T-cell (primary cell): ENCODE measurements at regions of chr3 and their contacts with region 1.

Region 1: GRCh38 chr3:133487920-133488540 is 85.5 kb upstream of the CDV3 start:
- DNase-seq: peak in 32 of 35 experiments; percentile 22 to 82 (median 40)
- ATAC-seq: peak in 2 of 4 experiments; percentile 32 to 42
- H3K4me3 ChIP-seq: no peak overlapping the region
- H3K4me3 Mint-ChIP-seq: peak overlapping the region in 1 of 3 donors; percentile 41
- H3K27ac ChIP-seq: no peak overlapping the region
- H3K27ac Mint-ChIP-seq: peak overlapping the region; percentile 97 to 99
- H3K4me1 ChIP-seq: peaks cover 26 to 31% of the 10 kb centered on the region in 2 experiments
- H3K4me1 Mint-ChIP-seq: peaks cover 49 to 52% (median 52%) of the 10 kb centered on the region in 3 donors
- H3K27me3 ChIP-seq: peaks cover 0 to 5% of the 10 kb centered on the region in 2 experiments
- H3K27me3 Mint-ChIP-seq: no peaks in the 10 kb centered on the region

Region 2: GRCh38 chr3:133042778-133043177 is 445.3 kb before region 1 on chr3:
- CTCF ChIA-PET with region 1: no interaction called
- POLR2A ChIA-PET with region 1: no interaction called
- DNase-seq: no peak
- ATAC-seq: no peak
- H3K4me3 ChIP-seq: no peak overlapping the region
- H3K4me3 Mint-ChIP-seq: no peak overlapping the region
- H3K27ac ChIP-seq: no peak overlapping the region
- H3K27ac Mint-ChIP-seq: no peak overlapping the region
- H3K4me1 ChIP-seq: peaks cover 0 to 10% of the 10 kb centered on the region in 2 experiments
- H3K4me1 Mint-ChIP-seq: peaks cover 0 to 10% (median 6%) of the 10 kb centered on the region in 3 donors
- H3K27me3 ChIP-seq: peaks cover 3 to 21% of the 10 kb centered on the region in 2 experiments
- H3K27me3 Mint-ChIP-seq: peaks cover 29 to 31% of the 10 kb centered on the region in 2 donors

Region 3: GRCh38 chr3:133475245-133476010 is 12.6 kb before region 1 on chr3:
- CTCF ChIA-PET with region 1: interaction called, 7 to 12 read pairs
- POLR2A ChIA-PET with region 1: interaction called in 1 of 2 experiments, 5 read pairs
- DNase-seq: no peak
- ATAC-seq: peak; percentile 34 to 66 (median 51)
- H3K4me3 ChIP-seq: no peak overlapping the region
- H3K4me3 Mint-ChIP-seq: peak overlapping the region in 1 of 3 donors; percentile 7
- H3K27ac ChIP-seq: peak overlapping the region; percentile 46
- H3K27ac Mint-ChIP-seq: peak overlapping the region; percentile 58 to 81
- H3K4me1 ChIP-seq: peaks cover 10% of the 10 kb centered on the region in 2 experiments
- H3K4me1 Mint-ChIP-seq: peaks cover 44 to 49% (median 47%) of the 10 kb centered on the region in 3 donors
- H3K27me3 ChIP-seq: peaks cover 0 to 2% of the 10 kb centered on the region in 2 experiments
- H3K27me3 Mint-ChIP-seq: no peaks in the 10 kb centered on the region

Region 4: DNA sequence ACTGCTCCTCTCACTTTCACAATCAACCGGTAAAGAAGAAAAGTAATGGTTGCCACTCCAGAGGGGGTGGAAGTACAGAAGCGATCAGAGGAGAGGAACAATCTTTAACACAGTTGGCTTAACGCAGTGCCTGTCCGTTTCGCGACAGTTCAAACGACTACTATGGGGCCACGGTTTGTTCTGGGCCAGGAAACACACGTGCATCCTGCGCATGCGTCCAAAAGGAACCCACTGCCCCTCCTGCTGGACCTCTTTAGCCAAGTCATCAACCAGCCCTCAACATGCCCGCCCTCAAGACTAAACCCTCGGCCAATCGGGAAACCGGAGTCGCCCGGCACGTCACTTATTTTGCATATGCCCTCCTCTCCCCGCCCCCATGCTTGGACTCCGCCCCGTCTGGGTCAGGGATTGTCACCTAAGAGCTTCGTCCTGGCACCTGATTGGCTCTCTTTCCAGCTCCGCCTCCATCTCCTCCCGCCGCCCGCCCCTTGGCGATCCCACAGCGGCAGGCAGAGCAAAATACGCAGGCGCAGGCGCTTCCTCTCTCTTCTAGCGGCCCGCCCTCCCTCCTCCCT is 85.1 kb after region 1 on chr3:
- CTCF ChIA-PET with region 1: interaction called, 11 to 14 read pairs
- POLR2A ChIA-PET with region 1: interaction called, 3 to 7 read pairs
- DNase-seq: peak; percentile 99 to 100 (median 100)
- ATAC-seq: peak; percentile 78 to 86 (median 83)
- H3K4me3 ChIP-seq: peak overlapping the region; percentile 25 to 49
- H3K4me3 Mint-ChIP-seq: peak overlapping the region; percentile 83 to 93 (median 85)
- H3K27ac ChIP-seq: peak overlapping the region; percentile 90
- H3K27ac Mint-ChIP-seq: peak overlapping the region; percentile 99 to 100
- H3K4me1 ChIP-seq: peaks cover 30 to 35% of the 10 kb centered on the region in 2 experiments
- H3K4me1 Mint-ChIP-seq: peaks cover 50 to 59% (median 54%) of the 10 kb centered on the region in 3 donors
- H3K27me3 ChIP-seq: no peaks in the 10 kb centered on the region
- H3K27me3 Mint-ChIP-seq: no peaks in the 10 kb centered on the region

Region 5: GRCh38 chr3:133578548-133579191 is 90.6 kb after region 1 on chr3:
- CTCF ChIA-PET with region 1: interaction called, 11 to 14 read pairs
- POLR2A ChIA-PET with region 1: interaction called in 1 of 2 experiments, 16 read pairs
- DNase-seq: peak in 1 of 35 experiments; percentile 28
- ATAC-seq: no peak
- H3K4me3 ChIP-seq: no peak overlapping the region
- H3K4me3 Mint-ChIP-seq: peak overlapping the region; percentile 55 to 93 (median 68)
- H3K27ac ChIP-seq: no peak overlapping the region
- H3K27ac Mint-ChIP-seq: peak overlapping the region; percentile 27 to 49
- H3K4me1 ChIP-seq: peaks cover 33 to 50% of the 10 kb centered on the region in 2 experiments
- H3K4me1 Mint-ChIP-seq: peaks cover 78 to 82% (median 79%) of the 10 kb centered on the region in 3 donors
- H3K27me3 ChIP-seq: no peaks in the 10 kb centered on the region
- H3K27me3 Mint-ChIP-seq: no peaks in the 10 kb centered on the region